Ascending aorta (tissue), 2 donors: ENCODE measurements at regions of chr19 and their contacts with region 1.

Region 1: GRCh38 chr19:45692187-45693105 is at the start of gene QPCTL:
- DNase-seq: peak; percentile 98 to 99
- H3K4me3 ChIP-seq: peak within 1 kb of the TSS; percentile 82 to 87
- H3K27ac ChIP-seq: peak within 1 kb of the TSS; percentile 87 to 93
- H3K4me1 ChIP-seq: peaks cover 0 to 15% of the 10 kb centered on the region in 2 donors
- H3K27me3 ChIP-seq: no peaks in the 10 kb centered on the region
- CTCF ChIP-seq: no peak
- total RNA-seq, gene QPCTL: 7.2 TPM

Region 2: GRCh38 chr19:45506246-45506990 is 186.0 kb before region 1 on chr19:
- intact Hi-C with region 1: loop called (anchors 5 kb)
- DNase-seq: peak; percentile 73 to 94
- H3K4me3 ChIP-seq: peak overlapping the region; percentile 97 to 99
- H3K27ac ChIP-seq: peak overlapping the region; percentile 90 to 96
- H3K4me1 ChIP-seq: peaks cover 2 to 9% of the 10 kb centered on the region in 2 donors
- H3K27me3 ChIP-seq: no peaks in the 10 kb centered on the region
- CTCF ChIP-seq: peak in 2 of 3 experiments; percentile 29 to 46

Region 3: GRCh38 chr19:45584332-45585157 is 107.9 kb before region 1 on chr19 and contains the start of gene OPA3:
- intact Hi-C with region 1: loop called (anchors 1 kb)
- DNase-seq: peak; percentile 99 to 100
- H3K4me3 ChIP-seq: peak within 1 kb of the TSS; percentile 67
- H3K27ac ChIP-seq: peak within 1 kb of the TSS; percentile 95 to 97
- H3K4me1 ChIP-seq: peaks cover 0 to 10% of the 10 kb centered on the region in 2 donors
- H3K27me3 ChIP-seq: no peaks in the 10 kb centered on the region
- CTCF ChIP-seq: no peak
- total RNA-seq, gene OPA3: 4.5 TPM

Region 4: GRCh38 chr19:45670670-45671453 is 21.6 kb before region 1 on chr19:
- intact Hi-C with region 1: no loop called
- DNase-seq: no peak
- H3K4me3 ChIP-seq: no peak overlapping the region
- H3K27ac ChIP-seq: no peak overlapping the region
- H3K4me1 ChIP-seq: peaks cover 8 to 9% of the 10 kb centered on the region in 2 donors
- H3K27me3 ChIP-seq: peaks cover 30% of the 10 kb centered on the region
- CTCF ChIP-seq: no peak

Region 5: DNA sequence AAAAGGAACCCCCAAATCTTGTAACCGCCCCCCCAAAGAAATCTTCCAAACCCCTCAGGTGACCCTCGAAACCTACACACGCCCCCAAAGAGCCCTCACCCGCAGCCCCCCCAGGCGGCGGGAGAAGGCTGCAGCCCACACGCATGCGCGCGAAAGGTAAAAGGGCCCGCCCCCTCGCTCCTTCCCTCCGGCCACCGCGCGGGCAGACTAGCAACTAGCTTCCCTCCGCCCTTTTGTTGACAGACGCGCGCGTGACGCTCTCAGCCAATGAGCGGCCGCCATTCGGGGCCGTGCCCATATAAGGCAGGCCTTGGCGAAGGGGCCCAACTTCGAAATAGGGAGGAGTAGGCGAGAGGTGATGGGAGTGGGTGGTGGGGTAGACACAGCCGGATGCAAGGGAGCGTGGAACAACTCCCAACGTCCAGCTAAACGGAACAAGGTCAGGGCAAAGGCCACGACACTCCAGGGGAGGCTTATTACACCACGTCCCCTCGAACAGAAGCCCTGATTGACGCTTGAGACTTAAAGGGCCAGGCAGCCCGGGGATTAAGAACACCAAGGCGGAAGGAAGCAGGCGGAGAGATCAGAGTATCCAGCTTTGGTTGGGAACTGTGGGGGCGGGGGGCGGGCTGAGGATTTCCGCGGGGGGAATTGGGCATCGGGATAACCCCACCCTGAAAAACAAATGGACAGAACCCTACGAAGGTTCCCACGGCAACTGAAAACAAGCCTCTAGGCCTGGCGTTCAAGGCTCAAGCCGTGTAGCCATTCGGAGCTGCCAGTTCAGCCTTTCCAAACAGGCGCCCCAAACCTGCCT is 24.9 kb after region 1 on chr19:
- intact Hi-C with region 1: loop called (anchors 1 kb)
- DNase-seq: peak; percentile 97 to 99
- H3K4me3 ChIP-seq: peak overlapping the region; percentile 68 to 75
- H3K27ac ChIP-seq: peak overlapping the region; percentile 75 to 92
- H3K4me1 ChIP-seq: peaks cover 0 to 11% of the 10 kb centered on the region in 2 donors
- H3K27me3 ChIP-seq: no peaks in the 10 kb centered on the region
- CTCF ChIP-seq: peak in 2 of 3 experiments; percentile 24 to 38

Region 6: DNA sequence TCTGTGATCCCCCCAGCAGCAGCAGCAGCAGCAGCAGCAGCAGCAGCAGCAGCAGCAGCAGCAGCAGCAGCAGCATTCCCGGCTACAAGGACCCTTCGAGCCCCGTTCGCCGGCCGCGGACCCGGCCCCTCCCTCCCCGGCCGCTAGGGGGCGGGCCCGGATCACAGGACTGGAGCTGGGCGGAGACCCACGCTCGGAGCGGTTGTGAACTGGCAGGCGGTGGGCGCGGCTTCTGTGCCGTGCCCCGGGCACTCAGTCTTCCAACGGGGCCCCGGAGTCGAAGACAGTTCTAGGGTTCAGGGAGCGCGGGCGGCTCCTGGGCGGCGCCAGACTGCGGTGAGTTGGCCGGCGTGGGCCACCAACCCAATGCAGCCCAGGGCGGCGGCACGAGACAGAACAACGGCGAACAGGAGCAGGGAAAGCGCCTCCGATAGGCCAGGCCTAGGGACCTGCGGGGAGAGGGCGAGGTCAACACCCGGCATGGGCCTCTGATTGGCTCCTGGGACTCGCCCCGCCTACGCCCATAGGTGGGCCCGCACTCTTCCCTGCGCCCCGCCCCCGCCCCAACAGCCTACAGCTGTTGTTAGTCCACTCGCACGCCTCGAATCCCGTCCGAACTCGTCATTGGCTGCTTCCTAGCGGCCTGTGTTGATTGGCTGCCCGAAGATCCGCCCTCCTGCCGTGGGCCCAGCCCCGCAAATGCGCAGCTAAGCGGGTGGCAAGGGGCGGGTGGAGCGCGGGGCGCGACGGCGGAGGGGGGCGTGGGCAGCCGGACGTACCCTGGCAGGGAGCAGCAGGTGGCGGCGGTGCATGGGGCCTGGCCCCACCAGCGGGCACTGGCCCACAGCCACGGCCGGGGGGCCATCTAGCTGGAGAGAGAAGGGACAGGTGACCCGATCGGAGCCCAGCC is 78.0 kb after region 1 on chr19:
- intact Hi-C with region 1: loop called (anchors 1 kb)
- DNase-seq: peak; percentile 89 to 98
- H3K4me3 ChIP-seq: peak overlapping the region; percentile 65 to 84
- H3K27ac ChIP-seq: peak overlapping the region; percentile 81 to 96
- H3K4me1 ChIP-seq: peaks cover 12 to 26% of the 10 kb centered on the region in 2 donors
- H3K27me3 ChIP-seq: no peaks in the 10 kb centered on the region
- CTCF ChIP-seq: peak; percentile 96 to 97 (median 97)

Region 7: GRCh38 chr19:45842198-45842597 is 149.8 kb after region 1 on chr19:
- intact Hi-C with region 1: no loop called
- DNase-seq: no peak
- H3K4me3 ChIP-seq: no peak overlapping the region
- H3K27ac ChIP-seq: no peak overlapping the region
- H3K4me1 ChIP-seq: no peaks in the 10 kb centered on the region
- H3K27me3 ChIP-seq: no peaks in the 10 kb centered on the region
- CTCF ChIP-seq: no peak